Thyroid gland (tissue), 4 donors: ENCODE measurements at regions of chr1 and their contacts with region 1.

Region 1: DNA sequence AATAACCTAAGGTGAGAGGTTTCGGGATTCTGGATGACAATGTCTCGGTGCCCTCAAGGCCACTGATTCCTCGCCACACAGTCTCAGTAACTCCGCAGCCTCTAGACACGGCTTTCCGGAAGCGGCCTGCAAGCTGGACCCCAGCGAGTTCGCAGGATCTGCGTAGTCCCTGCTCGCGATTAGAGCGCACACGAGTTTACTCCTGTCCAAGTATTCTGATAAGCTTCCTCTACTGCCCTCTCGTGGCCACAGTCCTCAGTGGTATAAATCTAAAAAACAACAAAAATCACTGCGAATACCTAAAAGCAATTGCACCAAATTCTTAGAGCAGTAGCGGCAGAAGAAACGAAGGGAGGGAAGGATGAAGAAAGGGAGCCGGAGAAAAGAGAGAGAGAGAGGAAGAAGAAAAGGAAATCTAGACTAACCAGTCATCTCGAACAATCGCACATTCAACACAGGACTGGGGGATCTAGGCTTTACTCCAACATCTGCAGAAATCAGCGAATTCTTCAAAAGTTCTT is 1.1 kb upstream of the PLXNA2 start:
- DNase-seq: peak; percentile 96 to 97
- H3K4me3 ChIP-seq: peak overlapping the region in 1 of 3 donors; percentile 54
- H3K27ac ChIP-seq: peak overlapping the region; percentile 81 to 90 (median 84)
- H3K4me1 ChIP-seq: peaks cover 21 to 39% of the 10 kb centered on the region in 2 donors
- H3K27me3 ChIP-seq: no peaks in the 10 kb centered on the region
- CTCF ChIP-seq: peak; percentile 64 to 97 (median 84)
- POLR2A ChIP-seq: peak in 1 of 2 donors; percentile 69

Region 2: DNA sequence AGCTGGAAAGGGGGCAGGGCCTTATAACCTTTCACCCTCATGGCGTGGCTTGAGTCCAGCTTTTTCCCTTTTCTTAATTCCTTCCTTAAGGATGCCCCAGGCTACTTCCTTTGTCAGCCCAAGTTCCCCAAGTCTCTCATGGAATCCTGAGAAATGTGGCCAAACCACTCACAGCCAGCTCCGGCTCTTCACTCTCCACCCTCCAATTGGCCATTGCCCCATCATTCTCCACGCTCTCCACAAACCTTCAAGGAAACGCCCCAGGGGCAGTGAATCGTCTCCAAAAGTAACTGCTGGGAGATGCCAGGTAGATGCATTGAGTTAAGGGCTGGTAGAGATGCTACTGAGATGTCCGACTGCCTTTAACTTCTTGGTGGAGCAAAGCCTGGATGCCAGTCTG is 220.8 kb before region 1 on chr1:
- intact Hi-C with region 1: loop called (anchors 5 kb)
- DNase-seq: no peak
- H3K4me3 ChIP-seq: no peak overlapping the region
- H3K27ac ChIP-seq: no peak overlapping the region
- H3K4me1 ChIP-seq: peaks cover 3 to 4% of the 10 kb centered on the region in 2 donors
- H3K27me3 ChIP-seq: no peaks in the 10 kb centered on the region
- CTCF ChIP-seq: no peak
- POLR2A ChIP-seq: no peak

Region 3: DNA sequence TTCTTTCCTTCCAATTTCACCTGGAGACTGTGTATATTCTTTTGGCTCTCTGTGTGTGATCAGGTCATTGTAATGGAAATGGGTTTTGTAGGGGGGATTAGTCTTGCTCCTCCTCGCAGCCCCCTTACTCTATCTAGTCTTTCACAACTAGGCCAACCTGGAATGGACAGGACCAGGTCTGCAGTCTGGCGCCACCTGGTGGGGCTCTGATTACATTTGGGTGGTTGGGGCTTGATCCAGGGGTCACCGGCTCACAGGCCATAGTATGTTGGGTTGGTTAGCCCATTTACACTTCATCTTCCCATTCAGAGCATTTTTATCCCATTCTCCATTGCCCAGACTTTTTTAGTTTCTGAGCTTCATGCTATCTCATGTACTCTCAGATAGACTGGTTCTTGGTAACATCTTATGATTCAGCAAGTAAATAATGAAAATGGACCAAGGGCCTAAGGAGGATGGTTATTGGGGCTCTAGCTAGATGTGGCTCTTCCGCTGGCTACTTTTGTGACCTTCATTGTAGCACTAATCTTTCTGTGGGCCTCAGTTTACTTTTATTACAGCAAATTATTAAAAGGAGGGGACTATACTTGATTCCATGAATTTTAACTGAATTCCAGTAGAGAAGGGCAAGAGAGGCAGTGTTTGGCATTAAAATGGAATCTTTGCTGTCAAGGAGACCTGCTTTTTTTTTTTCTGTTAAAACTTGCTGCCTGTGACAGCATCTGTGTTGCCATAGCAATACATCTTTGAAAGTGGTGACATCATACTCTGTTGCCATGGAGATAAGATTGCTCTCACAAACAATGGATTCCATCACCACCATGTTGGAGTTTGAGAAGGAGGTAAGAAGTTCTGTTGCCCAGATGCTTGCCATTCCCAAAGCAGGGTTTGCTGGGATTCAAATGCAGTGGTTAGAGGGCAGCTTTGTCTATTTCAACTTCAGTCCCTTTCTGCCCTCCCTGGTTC is 151.2 kb before region 1 on chr1:
- intact Hi-C with region 1: loop called (anchors 10 kb)
- DNase-seq: peak; percentile 80
- H3K4me3 ChIP-seq: no peak overlapping the region
- H3K27ac ChIP-seq: peak overlapping the region in 1 of 3 donors; percentile 31
- H3K4me1 ChIP-seq: peaks cover 17 to 21% of the 10 kb centered on the region in 2 donors
- H3K27me3 ChIP-seq: no peaks in the 10 kb centered on the region
- CTCF ChIP-seq: peak; percentile 62 to 83 (median 76)
- POLR2A ChIP-seq: no peak

Region 4: GRCh38 chr1:208132287-208132883 is 112.9 kb before region 1 on chr1:
- intact Hi-C with region 1: loop called (anchors 5 kb)
- DNase-seq: peak; percentile 89 to 90
- H3K4me3 ChIP-seq: no peak overlapping the region
- H3K27ac ChIP-seq: peak overlapping the region in 1 of 3 donors; percentile 42
- H3K4me1 ChIP-seq: peaks cover 25 to 28% of the 10 kb centered on the region in 2 donors
- H3K27me3 ChIP-seq: no peaks in the 10 kb centered on the region
- CTCF ChIP-seq: peak; percentile 61 to 90 (median 80)
- POLR2A ChIP-seq: no peak